ENCODE measurements at regions of chr10 and their contacts with region 1.

Region 1: GRCh38 chr10:68301790-68302502 is 29.9 kb upstream of the HNRNPH3 start:
- DNase-seq: no peak
- H3K4me3 ChIP-seq: no peak overlapping the region
- H3K27ac ChIP-seq: no peak overlapping the region
- H3K4me1 ChIP-seq: no peaks in the 10 kb centered on the region
- H3K27me3 ChIP-seq: no peaks in the 10 kb centered on the region
- CTCF ChIP-seq: peak; percentile 16 to 46 (median 32)

Region 2: GRCh38 chr10:67858971-67859370 is 443.0 kb before region 1 on chr10:
- intact Hi-C with region 1: loop called (anchors 5 kb)
- DNase-seq: no peak
- H3K4me3 ChIP-seq: no peak overlapping the region
- H3K27ac ChIP-seq: no peak overlapping the region
- H3K4me1 ChIP-seq: no peaks in the 10 kb centered on the region
- H3K27me3 ChIP-seq: no peaks in the 10 kb centered on the region
- CTCF ChIP-seq: no peak

Region 3: GRCh38 chr10:68202960-68203353 is 99.0 kb before region 1 on chr10:
- intact Hi-C with region 1: no loop called
- DNase-seq: no peak
- H3K4me3 ChIP-seq: no peak overlapping the region
- H3K27ac ChIP-seq: no peak overlapping the region
- H3K4me1 ChIP-seq: no peaks in the 10 kb centered on the region
- H3K27me3 ChIP-seq: no peaks in the 10 kb centered on the region
- CTCF ChIP-seq: no peak

Region 4: GRCh38 chr10:68446179-68446578 is 144.2 kb after region 1 on chr10:
- intact Hi-C with region 1: no loop called
- DNase-seq: no peak
- H3K4me3 ChIP-seq: no peak overlapping the region
- H3K27ac ChIP-seq: no peak overlapping the region
- H3K4me1 ChIP-seq: no peaks in the 10 kb centered on the region
- H3K27me3 ChIP-seq: no peaks in the 10 kb centered on the region
- CTCF ChIP-seq: no peak